ENCODE measurements at regions of chr6 and their contacts with region 1.

Region 1: GRCh38 chr6:73653571-73654424 is at the start of gene SLC17A5:
- DNase-seq: peak; percentile 85
- ATAC-seq: peak; percentile 90
- H3K4me3 Mint-ChIP-seq: peak within 1 kb of the TSS; percentile 98
- H3K27ac Mint-ChIP-seq: peak within 1 kb of the TSS; percentile 93
- H3K4me1 Mint-ChIP-seq: peaks cover 21% of the 10 kb centered on the region
- H3K27me3 Mint-ChIP-seq: no peaks in the 10 kb centered on the region
- CTCF ChIP-seq: no peak
- total RNA-seq, gene SLC17A5: 6.3 and 7.5 TPM in 2 replicates

Region 2: GRCh38 chr6:73233048-73233447 is 420.8 kb before region 1 on chr6:
- CTCF ChIA-PET with region 1: no interaction called
- POLR2A ChIA-PET with region 1: interaction called, 10 read pairs
- intact Hi-C with region 1: no loop called
- DNase-seq: no peak
- ATAC-seq: no peak
- H3K4me3 Mint-ChIP-seq: no peak overlapping the region
- H3K27ac Mint-ChIP-seq: no peak overlapping the region
- H3K4me1 Mint-ChIP-seq: peaks cover 6% of the 10 kb centered on the region
- H3K27me3 Mint-ChIP-seq: peaks cover 1% of the 10 kb centered on the region
- CTCF ChIP-seq: no peak

Region 3: DNA sequence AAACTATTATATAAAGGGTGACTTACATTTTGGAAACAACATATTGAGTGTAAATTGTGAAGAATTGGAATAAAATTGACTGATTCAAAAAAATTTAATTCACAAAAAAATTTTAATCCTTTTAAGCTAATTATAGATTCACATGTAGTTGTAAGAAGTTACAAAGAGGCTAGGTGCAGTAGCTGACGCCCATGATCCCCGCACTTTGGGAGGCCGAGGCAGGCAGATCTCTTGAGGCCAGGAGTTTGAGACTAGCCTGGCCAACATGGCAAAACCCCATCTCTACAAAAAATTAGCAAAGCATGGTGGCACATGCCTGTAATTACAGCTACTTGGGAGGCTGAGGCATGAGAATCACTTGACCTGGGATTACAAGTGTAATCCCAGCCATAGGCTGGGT is 360.5 kb before region 1 on chr6:
- CTCF ChIA-PET with region 1: no interaction called
- POLR2A ChIA-PET with region 1: no interaction called
- intact Hi-C with region 1: no loop called
- DNase-seq: no peak
- ATAC-seq: no peak
- H3K4me3 Mint-ChIP-seq: no peak overlapping the region
- H3K27ac Mint-ChIP-seq: no peak overlapping the region
- H3K4me1 Mint-ChIP-seq: no peaks in the 10 kb centered on the region
- H3K27me3 Mint-ChIP-seq: no peaks in the 10 kb centered on the region
- CTCF ChIP-seq: no peak

Region 4: GRCh38 chr6:73421534-73421933 is 232.3 kb before region 1 on chr6:
- CTCF ChIA-PET with region 1: no interaction called
- POLR2A ChIA-PET with region 1: no interaction called
- intact Hi-C with region 1: no loop called
- DNase-seq: no peak
- ATAC-seq: no peak
- H3K4me3 Mint-ChIP-seq: no peak overlapping the region
- H3K27ac Mint-ChIP-seq: no peak overlapping the region
- H3K4me1 Mint-ChIP-seq: no peaks in the 10 kb centered on the region
- H3K27me3 Mint-ChIP-seq: no peaks in the 10 kb centered on the region
- CTCF ChIP-seq: no peak

Region 5: GRCh38 chr6:73451223-73452107 is 202.3 kb before region 1 on chr6:
- CTCF ChIA-PET with region 1: interaction called, 13 read pairs
- POLR2A ChIA-PET with region 1: interaction called, 17 read pairs
- intact Hi-C with region 1: loop called (anchors 1 kb)
- DNase-seq: peak; percentile 54
- ATAC-seq: peak; percentile 59
- H3K4me3 Mint-ChIP-seq: peak overlapping the region; percentile 93
- H3K27ac Mint-ChIP-seq: peak overlapping the region; percentile 91
- H3K4me1 Mint-ChIP-seq: peaks cover 22% of the 10 kb centered on the region
- H3K27me3 Mint-ChIP-seq: no peaks in the 10 kb centered on the region
- CTCF ChIP-seq: no peak

Region 6: GRCh38 chr6:73520688-73521350 is 133.0 kb before region 1 on chr6 and contains the start of gene EEF1A1:
- CTCF ChIA-PET with region 1: interaction called, 22 read pairs
- POLR2A ChIA-PET with region 1: interaction called, 110 read pairs
- intact Hi-C with region 1: loop called (anchors 1 kb)
- DNase-seq: peak; percentile 91
- ATAC-seq: peak; percentile 79
- H3K4me3 Mint-ChIP-seq: peak within 1 kb of the TSS; percentile 96
- H3K27ac Mint-ChIP-seq: peak within 1 kb of the TSS; percentile 98
- H3K4me1 Mint-ChIP-seq: peaks cover 65% of the 10 kb centered on the region
- H3K27me3 Mint-ChIP-seq: no peaks in the 10 kb centered on the region
- CTCF ChIP-seq: no peak
- total RNA-seq, gene EEF1A1: 19,962 and 22,096 TPM in 2 replicates

Region 7: GRCh38 chr6:73610444-73611275 is 43.1 kb before region 1 on chr6:
- CTCF ChIA-PET with region 1: interaction called, 11 read pairs
- POLR2A ChIA-PET with region 1: no interaction called
- intact Hi-C with region 1: loop called (anchors 1 kb)
- DNase-seq: no peak
- ATAC-seq: peak; percentile 67
- H3K4me3 Mint-ChIP-seq: no peak overlapping the region
- H3K27ac Mint-ChIP-seq: no peak overlapping the region
- H3K4me1 Mint-ChIP-seq: peaks cover 5% of the 10 kb centered on the region
- H3K27me3 Mint-ChIP-seq: no peaks in the 10 kb centered on the region
- CTCF ChIP-seq: no peak

Region 8: DNA sequence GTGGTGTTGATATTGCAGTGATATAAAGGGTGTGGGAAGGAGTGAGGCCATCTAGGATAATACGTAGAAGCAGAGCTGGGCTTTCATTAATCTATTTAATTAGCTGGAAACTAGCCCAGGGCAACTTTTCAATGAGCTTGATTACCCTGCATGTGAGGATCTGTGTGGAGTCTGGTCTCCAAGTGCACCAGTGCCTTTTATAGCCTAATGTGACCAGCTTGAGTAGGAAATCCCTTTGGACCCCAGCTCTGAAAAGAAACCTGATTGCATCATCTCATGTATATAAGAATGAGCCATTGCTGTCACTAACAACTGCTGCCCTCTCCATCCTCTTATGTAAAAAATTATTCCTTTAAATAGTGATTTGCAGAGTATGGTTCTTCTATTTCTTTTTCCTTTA is 114.8 kb after region 1 on chr6:
- CTCF ChIA-PET with region 1: no interaction called
- POLR2A ChIA-PET with region 1: no interaction called
- intact Hi-C with region 1: no loop called
- DNase-seq: no peak
- ATAC-seq: no peak
- H3K4me3 Mint-ChIP-seq: no peak overlapping the region
- H3K27ac Mint-ChIP-seq: no peak overlapping the region
- H3K4me1 Mint-ChIP-seq: no peaks in the 10 kb centered on the region
- H3K27me3 Mint-ChIP-seq: no peaks in the 10 kb centered on the region
- CTCF ChIP-seq: no peak

Region 9: DNA sequence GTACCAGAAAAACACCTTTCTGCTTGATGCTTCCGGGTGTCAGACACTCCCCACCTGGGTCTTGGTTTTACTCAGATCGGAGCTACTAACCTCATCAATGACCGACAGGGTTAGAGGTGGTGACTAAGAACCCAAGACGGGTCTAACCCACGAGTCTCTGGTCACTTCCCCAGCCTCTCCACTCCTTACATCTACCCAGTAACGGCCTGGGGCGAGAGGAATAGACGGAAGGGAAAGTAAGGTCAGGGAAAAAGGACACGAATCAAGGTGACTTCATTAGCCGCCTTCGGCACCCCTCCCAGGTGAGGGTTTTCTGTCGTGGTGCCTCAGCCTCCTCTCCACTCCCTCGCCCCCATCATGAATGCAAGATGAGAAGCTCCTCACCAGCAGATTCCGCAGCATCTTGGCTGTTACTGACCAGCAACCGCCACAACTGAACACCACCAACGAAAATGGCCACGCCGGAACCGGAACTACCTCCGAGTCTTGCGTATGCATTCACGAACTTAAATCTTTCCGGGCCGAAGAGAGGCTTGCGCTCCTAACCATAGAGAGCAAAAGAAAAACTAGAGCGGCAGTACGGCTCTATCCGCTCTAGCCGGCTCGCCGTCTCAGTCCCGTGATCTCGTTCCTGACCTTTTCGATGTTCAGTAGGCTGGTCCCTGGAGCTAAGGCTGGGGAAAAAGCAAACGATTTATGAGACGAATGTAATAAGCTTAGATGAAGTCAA is 1589.7 kb after region 1 on chr6 and contains the start of gene COX7A2:
- CTCF ChIA-PET with region 1: no interaction called
- POLR2A ChIA-PET with region 1: interaction called, 3 read pairs
- intact Hi-C with region 1: loop called (anchors 1 kb)
- DNase-seq: peak; percentile 77
- ATAC-seq: peak; percentile 97
- H3K4me3 Mint-ChIP-seq: peak within 1 kb of the TSS; percentile 94
- H3K27ac Mint-ChIP-seq: peak within 1 kb of the TSS; percentile 95
- H3K4me1 Mint-ChIP-seq: peaks cover 21% of the 10 kb centered on the region
- H3K27me3 Mint-ChIP-seq: peaks cover 13% of the 10 kb centered on the region
- CTCF ChIP-seq: no peak
- total RNA-seq, gene COX7A2: 259 and 301 TPM in 2 replicates